ENCODE measurements at regions of chr13 and their contacts with region 1.

Region 1: GRCh38 chr13:40682449-40683240 is 16.2 kb upstream of the FOXO1 start:
- DNase-seq: no peak
- ATAC-seq: peak; percentile 24
- H3K4me3 ChIP-seq: no peak overlapping the region
- H3K27ac ChIP-seq: no peak overlapping the region
- H3K4me1 ChIP-seq: no peaks in the 10 kb centered on the region
- H3K27me3 ChIP-seq: no peaks in the 10 kb centered on the region
- CTCF ChIP-seq: peak; percentile 73

Region 2: DNA sequence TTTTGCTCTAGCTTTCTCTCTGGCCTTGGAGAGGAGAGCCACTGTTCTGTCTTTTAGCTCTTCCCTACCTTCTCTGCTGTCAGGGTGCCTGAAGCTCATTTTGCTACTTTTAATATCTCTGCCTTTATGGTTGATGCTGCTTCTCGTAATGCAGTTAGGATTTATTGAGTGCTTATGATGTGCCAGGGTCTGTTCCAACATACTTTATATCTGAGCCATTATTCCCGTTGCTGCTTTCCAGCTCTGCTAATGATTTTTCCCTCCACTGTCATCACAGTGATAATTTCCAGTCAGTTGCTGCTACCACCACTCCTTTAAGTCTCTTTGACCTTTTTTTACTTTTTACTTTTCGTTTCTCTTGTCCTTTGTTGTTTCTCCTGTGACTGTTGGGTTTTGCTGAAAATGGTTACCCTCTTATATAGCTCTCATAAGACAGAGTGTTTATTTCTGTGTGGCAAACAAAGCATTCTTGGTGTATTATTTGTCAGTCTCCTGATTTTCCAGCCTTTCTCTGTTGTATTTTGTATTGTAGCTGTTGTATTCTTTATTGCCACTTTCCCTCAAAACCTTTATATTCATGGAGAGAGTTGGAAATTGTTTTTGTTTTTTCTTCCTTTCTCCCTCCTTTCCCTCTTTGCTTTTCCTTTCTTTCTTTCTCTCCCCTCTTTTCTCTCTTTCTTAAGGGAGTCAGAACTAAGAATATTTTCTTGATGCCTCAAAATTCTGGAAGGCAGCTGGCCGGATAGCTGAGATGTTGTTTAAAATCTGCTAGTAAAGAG is 989.8 kb before region 1 on chr13:
- intact Hi-C with region 1: loop called (anchors 10 kb)
- DNase-seq: no peak
- ATAC-seq: no peak
- H3K4me3 ChIP-seq: no peak overlapping the region
- H3K27ac ChIP-seq: no peak overlapping the region
- H3K4me1 ChIP-seq: no peaks in the 10 kb centered on the region
- H3K27me3 ChIP-seq: no peaks in the 10 kb centered on the region
- CTCF ChIP-seq: no peak

Region 3: GRCh38 chr13:40069173-40070044 is 613.2 kb before region 1 on chr13:
- intact Hi-C with region 1: loop called (anchors 5 kb)
- DNase-seq: peak; percentile 75
- ATAC-seq: peak; percentile 96
- H3K4me3 ChIP-seq: no peak overlapping the region
- H3K27ac ChIP-seq: no peak overlapping the region
- H3K4me1 ChIP-seq: peaks cover 9% of the 10 kb centered on the region
- H3K27me3 ChIP-seq: no peaks in the 10 kb centered on the region
- CTCF ChIP-seq: peak; percentile 85